ENCODE measurements at regions of chr19 and their contacts with region 1.

Region 1: GRCh38 chr19:45927565-45928261 is 13.1 kb upstream of the NANOS2 start:
- DNase-seq: peak; percentile 88
- H3K4me3 ChIP-seq: peak overlapping the region; percentile 5 to 23 (median 22)
- H3K27ac ChIP-seq: no peak overlapping the region
- H3K4me1 ChIP-seq: peaks cover 6% of the 10 kb centered on the region
- H3K27me3 ChIP-seq: peaks cover 3% of the 10 kb centered on the region
- CTCF ChIP-seq: no peak

Region 2: DNA sequence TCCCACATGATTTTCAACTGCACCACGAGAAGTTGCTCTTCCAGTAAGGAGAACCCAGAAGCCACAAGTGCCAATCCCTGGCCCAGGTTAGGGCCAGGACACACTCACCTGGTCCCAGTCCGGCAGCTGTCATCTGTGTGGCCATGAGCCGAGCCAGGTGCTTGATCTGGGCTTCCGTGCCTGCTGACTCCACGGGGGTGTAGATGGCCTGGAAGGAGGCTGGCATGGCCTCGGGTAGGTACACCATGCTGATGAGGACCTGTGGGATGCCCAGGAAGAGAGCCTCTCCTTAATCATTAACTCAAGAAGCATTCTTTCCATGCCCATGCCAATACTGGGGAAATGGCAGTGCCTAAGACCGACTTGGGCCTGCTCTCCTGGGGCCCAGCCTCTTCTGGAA is 92.7 kb before region 1 on chr19:
- CTCF ChIA-PET with region 1: no interaction called
- dilution Hi-C with region 1: loop called (anchors 5 kb)
- in situ Hi-C with region 1: no loop called
- intact Hi-C with region 1: no loop called
- DNase-seq: no peak
- H3K4me3 ChIP-seq: no peak overlapping the region
- H3K27ac ChIP-seq: no peak overlapping the region
- H3K4me1 ChIP-seq: no peaks in the 10 kb centered on the region
- H3K27me3 ChIP-seq: no peaks in the 10 kb centered on the region
- CTCF ChIP-seq: no peak

Region 3: GRCh38 chr19:45939792-45940514 is 12.2 kb after region 1 on chr19:
- CTCF ChIA-PET with region 1: no interaction called
- dilution Hi-C with region 1: no loop called
- in situ Hi-C with region 1: no loop called
- intact Hi-C with region 1: no loop called
- DNase-seq: no peak
- H3K4me3 ChIP-seq: no peak overlapping the region
- H3K27ac ChIP-seq: no peak overlapping the region
- H3K4me1 ChIP-seq: peaks cover 5% of the 10 kb centered on the region
- H3K27me3 ChIP-seq: peaks cover 1% of the 10 kb centered on the region
- CTCF ChIP-seq: no peak

Region 4: DNA sequence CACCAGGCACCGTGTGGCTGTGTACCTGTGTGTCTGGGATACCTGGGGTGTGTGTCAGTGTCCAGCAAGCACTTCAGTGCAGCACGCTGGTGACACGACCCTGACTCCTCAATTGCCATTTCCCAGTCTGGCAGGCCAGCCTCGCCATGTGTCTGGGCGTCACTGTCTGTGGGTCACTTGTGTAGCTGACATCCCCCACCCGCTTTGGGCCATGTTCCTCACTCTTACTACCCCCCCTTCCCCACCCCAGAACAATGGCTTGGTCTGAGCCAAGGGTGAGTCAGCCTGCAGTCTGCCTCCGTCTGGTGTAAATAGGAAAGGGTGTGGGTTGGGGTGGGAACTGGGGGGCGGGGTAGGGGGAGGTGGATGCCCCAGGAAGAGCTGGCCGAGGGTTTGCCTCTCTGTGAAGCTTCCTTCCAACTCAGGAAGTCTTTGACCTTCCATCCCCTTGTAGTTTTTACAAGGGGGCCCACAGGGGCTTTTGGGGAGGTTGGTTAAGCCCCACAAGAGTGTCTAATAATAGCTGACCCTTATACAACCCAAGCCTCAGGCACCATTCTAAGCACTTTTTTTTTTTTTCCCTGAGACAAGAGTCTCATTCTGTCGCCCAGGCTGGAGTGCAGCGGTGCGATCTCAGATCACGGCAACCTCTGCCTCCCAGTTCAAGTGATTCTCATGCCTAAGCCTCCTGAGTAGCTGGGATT is 28.3 kb after region 1 on chr19:
- CTCF ChIA-PET with region 1: no interaction called
- dilution Hi-C with region 1: loop called (anchors 5 kb)
- in situ Hi-C with region 1: no loop called
- intact Hi-C with region 1: no loop called
- DNase-seq: peak; percentile 79
- H3K4me3 ChIP-seq: no peak overlapping the region
- H3K27ac ChIP-seq: no peak overlapping the region
- H3K4me1 ChIP-seq: peaks cover 24% of the 10 kb centered on the region
- H3K27me3 ChIP-seq: no peaks in the 10 kb centered on the region
- CTCF ChIP-seq: no peak

Region 5: DNA sequence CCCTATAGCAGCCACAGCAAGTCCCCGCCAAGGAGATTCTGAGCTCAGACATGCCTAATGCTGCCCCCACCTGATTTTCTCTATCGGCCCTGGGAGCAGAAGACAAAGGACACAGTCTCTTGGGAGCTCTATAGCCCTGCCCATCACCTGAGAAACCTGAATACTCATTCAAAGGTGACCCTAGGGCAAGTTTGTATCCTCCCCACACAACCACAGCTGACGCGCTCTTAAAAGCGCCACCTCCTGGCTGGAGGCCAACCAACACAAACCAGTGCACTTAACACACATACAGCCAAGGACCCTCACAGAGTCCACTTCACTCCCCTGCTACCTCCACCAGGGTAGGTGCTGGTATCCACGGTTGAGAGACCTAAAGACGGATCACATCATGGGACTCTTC is 121.9 kb after region 1 on chr19:
- CTCF ChIA-PET with region 1: no interaction called
- dilution Hi-C with region 1: loop called (anchors 5 kb)
- in situ Hi-C with region 1: no loop called
- intact Hi-C with region 1: no loop called
- DNase-seq: peak; percentile 92
- H3K4me3 ChIP-seq: no peak overlapping the region
- H3K27ac ChIP-seq: peak overlapping the region; percentile 52
- H3K4me1 ChIP-seq: peaks cover 12% of the 10 kb centered on the region
- H3K27me3 ChIP-seq: no peaks in the 10 kb centered on the region
- CTCF ChIP-seq: no peak